Ascending aorta (tissue), 2 donors: ENCODE measurements at regions of chr5 and their contacts with region 1.

Region 1: DNA sequence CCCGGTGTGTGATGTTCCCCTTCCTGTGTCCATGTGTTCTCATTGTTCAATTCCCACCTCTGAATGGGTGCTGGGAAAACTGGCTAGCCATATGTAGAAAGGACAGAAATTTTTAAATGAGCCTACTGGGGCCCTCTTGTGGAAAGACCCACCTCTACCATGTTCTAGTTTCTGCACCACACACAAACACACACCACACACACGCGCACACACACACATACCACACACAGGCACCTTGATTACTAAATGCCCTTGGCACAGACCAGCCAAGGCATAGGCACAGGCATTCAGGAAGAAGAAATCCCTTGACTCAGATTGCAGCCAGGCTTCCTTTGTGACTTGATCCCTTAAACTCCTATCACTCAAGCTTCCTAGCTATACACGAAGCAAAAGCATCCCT is 60.5 kb downstream of the SIL1 start:
- DNase-seq: no peak
- H3K4me3 ChIP-seq: no peak overlapping the region
- H3K27ac ChIP-seq: peak overlapping the region; percentile 69 to 74
- H3K4me1 ChIP-seq: peaks cover 16 to 52% of the 10 kb centered on the region in 2 donors
- H3K27me3 ChIP-seq: no peaks in the 10 kb centered on the region
- CTCF ChIP-seq: peak in 1 of 3 experiments; percentile 12

Region 2: GRCh38 chr5:139091439-139092156 is 46.1 kb before region 1 on chr5:
- intact Hi-C with region 1: no loop called
- DNase-seq: no peak
- H3K4me3 ChIP-seq: no peak overlapping the region
- H3K27ac ChIP-seq: no peak overlapping the region
- H3K4me1 ChIP-seq: peaks cover 0 to 6% of the 10 kb centered on the region in 2 donors
- H3K27me3 ChIP-seq: no peaks in the 10 kb centered on the region
- CTCF ChIP-seq: peak; percentile 37 to 69 (median 37)

Region 3: DNA sequence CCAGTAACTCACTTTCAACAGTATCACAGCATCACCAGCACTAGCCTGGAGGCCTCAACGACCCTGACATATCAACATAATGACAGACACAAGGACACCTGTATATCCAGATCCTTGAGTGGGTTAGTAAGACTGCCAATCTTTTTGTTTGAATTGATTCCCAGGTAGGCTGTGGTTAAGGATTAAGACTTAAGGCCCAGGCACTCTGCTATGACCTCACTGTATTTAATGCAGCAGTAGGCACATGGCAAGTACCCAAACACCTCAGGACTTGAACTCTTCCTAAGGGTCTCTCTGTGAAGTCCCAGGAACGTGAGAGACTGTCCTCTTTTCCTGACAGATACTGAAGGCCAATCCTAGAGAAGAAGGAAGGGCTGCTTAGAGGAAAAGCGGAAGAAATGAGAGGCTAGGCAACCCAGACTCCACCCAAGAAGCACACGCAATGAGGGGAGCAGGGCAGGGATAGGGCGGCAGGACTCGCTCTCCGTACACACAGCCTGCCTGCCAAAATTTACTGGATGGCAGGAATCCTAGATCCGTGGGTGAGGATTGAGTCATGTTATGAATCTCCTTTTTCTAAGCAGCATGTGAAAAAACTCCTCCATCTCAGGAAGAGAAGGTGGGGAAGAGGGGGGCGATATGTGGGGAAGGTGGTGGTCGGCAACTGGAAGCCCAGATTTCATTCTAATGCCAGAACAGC is 33.0 kb before region 1 on chr5:
- intact Hi-C with region 1: loop called (anchors 2 kb)
- DNase-seq: peak; percentile 42 to 92
- H3K4me3 ChIP-seq: peak overlapping the region; percentile 3 to 23
- H3K27ac ChIP-seq: peak overlapping the region; percentile 90 to 92
- H3K4me1 ChIP-seq: peaks cover 0 to 39% of the 10 kb centered on the region in 2 donors
- H3K27me3 ChIP-seq: no peaks in the 10 kb centered on the region
- CTCF ChIP-seq: no peak

Region 4: GRCh38 chr5:139116100-139116655 is 21.5 kb before region 1 on chr5:
- intact Hi-C with region 1: no loop called
- DNase-seq: no peak
- H3K4me3 ChIP-seq: no peak overlapping the region
- H3K27ac ChIP-seq: no peak overlapping the region
- H3K4me1 ChIP-seq: peaks cover 18 to 45% of the 10 kb centered on the region in 2 donors
- H3K27me3 ChIP-seq: no peaks in the 10 kb centered on the region
- CTCF ChIP-seq: no peak

Region 5: DNA sequence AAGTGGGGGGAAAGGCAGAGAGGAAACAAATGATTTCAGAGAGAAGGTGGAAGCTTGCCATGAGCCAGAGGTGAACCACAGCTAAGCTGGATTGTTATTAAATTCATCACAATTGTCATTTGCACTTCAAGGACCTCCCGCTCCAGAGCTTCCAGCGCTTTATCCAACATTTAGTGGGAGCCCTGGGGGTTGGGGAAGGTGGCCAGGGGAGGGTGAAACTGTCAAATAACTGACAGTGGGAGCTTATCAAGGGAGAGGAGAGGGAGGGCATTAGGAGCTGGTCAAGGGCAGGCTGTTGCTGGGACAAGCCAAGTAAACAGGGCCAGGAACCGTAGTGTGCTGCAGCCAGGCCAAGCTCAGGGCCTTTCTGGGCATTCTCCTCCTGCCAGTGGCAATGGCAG is 11.0 kb before region 1 on chr5:
- intact Hi-C with region 1: loop called (anchors 2 kb)
- DNase-seq: no peak
- H3K4me3 ChIP-seq: no peak overlapping the region
- H3K27ac ChIP-seq: peak overlapping the region; percentile 83 to 88
- H3K4me1 ChIP-seq: peaks cover 15 to 33% of the 10 kb centered on the region in 2 donors
- H3K27me3 ChIP-seq: no peaks in the 10 kb centered on the region
- CTCF ChIP-seq: no peak